ENCODE measurements at regions of chr2 and their contacts with region 1.

Region 1: GRCh38 chr2:70115646-70116442 is 28.6 kb downstream of the PCBP1 start:
- DNase-seq: no peak
- H3K4me3 ChIP-seq: peak overlapping the region in 3 of 7 experiments; percentile 4 to 50 (median 30)
- H3K27ac ChIP-seq: peak overlapping the region in 1 of 2 experiments; percentile 21
- H3K4me1 ChIP-seq: peaks cover 6 to 48% (median 10%) of the 10 kb centered on the region in 4 experiments
- H3K27me3 ChIP-seq: no peaks in the 10 kb centered on the region

Region 2: DNA sequence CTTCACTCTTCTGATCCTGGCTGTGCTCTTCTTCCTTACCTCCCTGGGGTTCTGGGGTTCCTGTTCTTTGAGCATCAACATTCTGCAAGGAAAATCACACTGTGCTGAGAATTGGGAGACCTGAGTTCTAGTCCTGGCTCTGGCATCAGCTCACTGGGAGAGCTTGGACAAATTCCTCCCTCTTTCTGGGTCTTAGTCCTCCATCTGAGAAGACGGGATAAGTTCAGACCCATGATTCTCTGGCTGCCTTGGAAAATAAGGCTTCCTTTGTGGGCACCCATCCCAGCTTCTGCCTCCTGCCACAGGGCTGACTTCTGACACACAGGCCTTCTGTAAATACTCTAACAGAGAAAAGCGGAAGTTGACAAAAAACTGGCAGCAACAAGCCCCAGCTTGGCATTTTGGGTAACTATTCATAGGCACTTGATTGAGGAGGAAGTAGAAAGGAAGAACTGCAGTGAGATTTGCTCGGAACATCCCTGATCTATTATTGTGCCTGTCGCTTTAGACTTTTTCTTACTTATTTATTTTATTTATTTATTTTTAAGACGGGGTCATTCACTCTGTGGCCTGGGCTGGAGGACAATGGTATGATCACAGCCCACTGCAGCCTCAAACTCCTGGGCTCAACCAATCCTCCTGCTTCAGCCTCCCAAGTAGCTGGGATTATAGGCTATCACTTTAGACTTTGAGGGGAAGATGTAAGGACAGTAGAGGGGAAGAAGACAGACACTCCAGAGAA is 20.7 kb before region 1 on chr2:
- CTCF ChIA-PET with region 1: interaction called, 10 read pairs
- POLR2A ChIA-PET with region 1: interaction called, 7 read pairs
- DNase-seq: peak; percentile 93 to 98 (median 97)
- H3K4me3 ChIP-seq: peak overlapping the region in 6 of 7 experiments; percentile 11 to 49 (median 26)
- H3K27ac ChIP-seq: peak overlapping the region; percentile 51 to 75
- H3K4me1 ChIP-seq: peaks cover 20 to 43% (median 31%) of the 10 kb centered on the region in 4 experiments
- H3K27me3 ChIP-seq: no peaks in the 10 kb centered on the region